Naive thymus-derived CD4-positive, alpha-beta T cell (primary cell): ENCODE measurements at regions of chr15 and their contacts with region 1.

Region 1: GRCh38 chr15:41603941-41604911 is 45.2 kb downstream of the TYRO3 start:
- DNase-seq: peak; percentile 19 to 62 (median 50)
- ATAC-seq: peak; percentile 93
- H3K4me3 ChIP-seq: no peak overlapping the region
- H3K4me3 Mint-ChIP-seq: peak overlapping the region in 9 of 10 donors; percentile 17 to 81 (median 73)
- H3K27ac ChIP-seq: no peak overlapping the region
- H3K27ac Mint-ChIP-seq: peak overlapping the region in 1 of 9 donors; percentile 74
- H3K4me1 ChIP-seq: peaks cover 0 to 5% of the 10 kb centered on the region in 2 donors
- H3K4me1 Mint-ChIP-seq: peaks cover 3 to 10% (median 7%) of the 10 kb centered on the region in 7 donors
- H3K27me3 ChIP-seq: no peaks in the 10 kb centered on the region
- H3K27me3 Mint-ChIP-seq: peaks cover 0 to 43% (median 9%) of the 10 kb centered on the region in 5 donors

Region 2: DNA sequence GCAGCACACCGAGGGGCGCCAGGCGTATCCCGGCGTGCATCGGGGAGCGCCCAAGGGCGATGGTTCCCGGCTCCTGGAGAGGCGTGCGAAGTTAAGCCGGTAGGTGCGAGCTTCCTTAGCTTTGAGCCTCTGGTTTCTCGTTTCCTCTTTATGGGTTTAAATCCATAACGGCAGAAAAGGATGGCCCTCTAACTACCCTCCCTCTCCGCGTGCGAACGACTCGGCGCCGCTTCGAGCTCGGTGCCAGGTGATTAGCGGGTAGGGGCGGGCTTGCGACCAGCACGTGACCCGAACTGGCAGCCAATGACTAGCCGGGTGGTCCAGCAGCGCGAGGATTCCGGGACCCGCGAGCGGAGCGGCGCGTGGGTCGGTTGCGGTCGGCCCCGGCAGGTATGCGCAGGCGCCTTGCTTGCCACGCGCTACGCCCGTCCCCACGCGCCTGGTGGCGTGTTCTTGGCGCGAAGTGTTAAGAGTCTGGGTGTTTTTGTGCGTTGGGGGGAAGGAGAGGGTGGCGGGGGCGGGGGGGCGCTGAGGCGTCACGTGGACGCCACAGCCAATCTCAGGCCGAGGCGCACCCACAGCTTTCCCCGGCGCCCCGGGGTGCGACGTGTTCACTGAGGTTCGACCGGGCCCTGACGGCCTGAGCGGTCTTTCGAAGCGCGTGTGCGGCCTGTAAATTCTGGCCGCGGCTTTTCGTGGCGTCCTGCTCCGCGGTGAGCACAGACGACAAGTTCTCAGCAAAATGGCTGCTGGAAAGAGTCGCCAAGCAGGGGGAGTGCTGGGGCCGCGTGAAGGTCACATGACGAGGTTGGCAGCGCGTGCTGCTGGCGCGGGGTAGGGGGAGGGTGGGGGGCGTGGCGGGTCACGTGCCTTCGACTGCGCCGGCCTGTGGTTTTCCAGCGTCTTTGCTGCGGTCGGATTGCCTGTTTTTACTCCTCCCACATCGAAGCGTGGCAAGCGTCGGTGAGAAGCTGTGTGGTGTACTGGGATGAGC is 17.3 kb after region 1 on chr15:
- CTCF ChIA-PET with region 1: interaction called, 3 read pairs
- POLR2A ChIA-PET with region 1: no interaction called
- intact Hi-C with region 1: loop called in 1 of 2 experiments (anchors 1 kb)
- DNase-seq: peak; percentile 56 to 81 (median 78)
- ATAC-seq: peak; percentile 87
- H3K4me3 ChIP-seq: peak overlapping the region; percentile 67
- H3K4me3 Mint-ChIP-seq: peak overlapping the region; percentile 55 to 87 (median 78)
- H3K27ac ChIP-seq: peak overlapping the region; percentile 41
- H3K27ac Mint-ChIP-seq: peak overlapping the region; percentile 68 to 87 (median 77)
- H3K4me1 ChIP-seq: peaks cover 5 to 8% of the 10 kb centered on the region in 2 donors
- H3K4me1 Mint-ChIP-seq: peaks cover 5 to 29% (median 18%) of the 10 kb centered on the region in 7 donors
- H3K27me3 ChIP-seq: no peaks in the 10 kb centered on the region
- H3K27me3 Mint-ChIP-seq: peaks cover 0 to 29% (median 0%) of the 10 kb centered on the region in 5 donors

Region 3: DNA sequence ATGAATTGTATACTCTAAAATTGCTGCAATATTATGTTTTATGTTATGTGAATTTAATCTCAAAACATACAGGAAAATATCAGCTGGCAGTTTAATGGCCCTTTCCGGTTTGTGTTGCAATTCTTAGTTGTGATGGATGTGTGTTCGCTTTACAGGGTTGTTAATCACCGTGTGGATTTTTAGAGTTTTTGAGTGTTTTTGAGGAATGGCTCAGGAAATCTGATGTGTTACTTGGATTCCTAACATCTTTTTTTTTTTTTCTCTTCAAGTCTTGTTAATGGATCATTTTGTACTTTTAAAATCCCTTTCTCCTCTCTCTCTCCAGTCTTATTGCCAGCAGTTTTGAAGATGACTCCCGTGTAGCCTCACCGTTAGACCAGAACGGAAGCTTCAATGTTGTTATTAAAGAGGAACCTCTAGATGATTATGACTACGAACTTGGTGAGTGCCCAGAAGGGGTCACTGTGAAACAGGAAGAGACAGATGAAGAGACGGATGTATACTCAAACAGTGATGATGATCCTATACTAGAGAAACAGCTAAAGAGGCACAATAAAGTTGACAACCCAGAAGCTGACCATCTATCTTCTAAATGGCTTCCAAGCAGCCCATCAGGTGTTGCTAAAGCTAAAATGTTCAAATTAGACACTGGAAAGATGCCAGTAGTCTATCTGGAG is 91.7 kb after region 1 on chr15:
- CTCF ChIA-PET with region 1: interaction called, 3 read pairs
- POLR2A ChIA-PET with region 1: no interaction called
- intact Hi-C with region 1: loop called in 1 of 2 experiments (anchors 5 kb)
- DNase-seq: peak in 7 of 9 donors; percentile 22 to 56 (median 44)
- ATAC-seq: peak; percentile 97
- H3K4me3 ChIP-seq: no peak overlapping the region
- H3K4me3 Mint-ChIP-seq: peak overlapping the region; percentile 3 to 69 (median 56)
- H3K27ac ChIP-seq: peak overlapping the region; percentile 42
- H3K27ac Mint-ChIP-seq: peak overlapping the region; percentile 22 to 81 (median 67)
- H3K4me1 ChIP-seq: peaks cover 0 to 10% of the 10 kb centered on the region in 2 donors
- H3K4me1 Mint-ChIP-seq: peaks cover 25 to 74% (median 59%) of the 10 kb centered on the region in 7 donors
- H3K27me3 ChIP-seq: no peaks in the 10 kb centered on the region
- H3K27me3 Mint-ChIP-seq: no peaks in the 10 kb centered on the region

Region 4: DNA sequence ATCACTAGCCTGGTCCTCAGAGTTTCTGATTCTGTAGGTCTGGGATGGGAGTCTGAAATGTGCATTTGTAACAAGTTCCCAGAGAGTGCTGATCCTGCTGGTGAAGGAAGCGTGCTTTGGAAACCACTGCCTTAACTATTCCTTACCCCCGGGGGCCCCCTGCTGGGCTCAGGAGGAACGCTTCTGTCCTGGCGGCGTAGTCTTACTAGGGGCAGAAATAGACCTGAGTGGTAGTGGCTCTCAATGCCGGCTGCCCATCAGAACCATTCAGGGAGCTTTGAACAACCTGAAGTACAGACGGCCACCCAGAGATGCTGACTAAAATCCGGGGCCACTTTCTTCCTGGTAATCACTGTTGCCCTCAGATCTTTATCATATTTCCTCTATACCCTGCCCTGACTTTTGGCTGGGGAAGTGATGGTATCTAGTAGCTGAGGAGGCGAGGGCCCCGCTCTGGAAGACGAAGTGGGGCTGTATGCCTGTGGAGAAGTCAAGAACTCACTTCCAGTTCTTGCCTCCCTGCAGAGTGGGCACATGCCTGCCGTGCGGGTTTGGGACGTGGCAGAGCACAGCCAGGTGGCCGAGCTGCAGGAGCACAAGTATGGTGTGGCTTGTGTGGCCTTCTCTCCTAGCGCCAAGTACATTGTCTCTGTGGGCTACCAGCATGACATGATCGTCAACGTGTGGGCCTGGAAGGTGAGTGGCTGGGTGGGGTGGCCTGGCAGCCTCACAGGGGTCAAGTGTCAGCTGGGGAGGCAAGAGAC is 207.4 kb after region 1 on chr15:
- CTCF ChIA-PET with region 1: interaction called, 14 read pairs
- POLR2A ChIA-PET with region 1: no interaction called
- intact Hi-C with region 1: loop called (anchors 1 kb)
- DNase-seq: peak; percentile 58 to 77 (median 72)
- ATAC-seq: peak; percentile 95
- H3K4me3 ChIP-seq: no peak overlapping the region
- H3K4me3 Mint-ChIP-seq: peak overlapping the region in 1 of 10 donors; percentile 30
- H3K27ac ChIP-seq: no peak overlapping the region
- H3K27ac Mint-ChIP-seq: peak overlapping the region in 1 of 9 donors; percentile 58
- H3K4me1 ChIP-seq: peaks cover 0 to 3% of the 10 kb centered on the region in 2 donors
- H3K4me1 Mint-ChIP-seq: peaks cover 8 to 28% (median 12%) of the 10 kb centered on the region in 7 donors
- H3K27me3 ChIP-seq: no peaks in the 10 kb centered on the region
- H3K27me3 Mint-ChIP-seq: no peaks in the 10 kb centered on the region

Region 5: DNA sequence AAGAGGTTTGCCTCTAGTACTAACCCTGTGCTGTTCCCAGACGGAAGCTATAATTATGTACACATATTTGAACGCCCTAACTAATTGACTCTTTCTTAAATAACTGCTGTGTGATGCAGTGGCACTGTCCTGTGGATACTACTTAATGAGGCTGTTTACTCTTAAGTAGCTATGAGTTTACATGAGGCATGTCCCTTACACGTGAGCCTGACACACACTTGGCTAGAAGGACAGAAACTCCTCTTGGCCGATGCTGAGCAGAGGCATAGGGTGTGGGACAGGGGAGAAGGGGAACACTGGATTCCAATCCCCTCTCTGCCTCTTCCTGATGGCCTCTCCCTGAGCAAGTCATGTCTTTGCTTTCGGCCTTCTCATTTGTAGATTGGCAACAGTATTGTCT is 346.3 kb after region 1 on chr15:
- CTCF ChIA-PET with region 1: no interaction called
- POLR2A ChIA-PET with region 1: no interaction called
- intact Hi-C with region 1: no loop called
- DNase-seq: no peak
- ATAC-seq: no peak
- H3K4me3 ChIP-seq: no peak overlapping the region
- H3K4me3 Mint-ChIP-seq: no peak overlapping the region
- H3K27ac ChIP-seq: no peak overlapping the region
- H3K27ac Mint-ChIP-seq: peak overlapping the region in 1 of 9 donors; percentile 38
- H3K4me1 ChIP-seq: no peaks in the 10 kb centered on the region
- H3K4me1 Mint-ChIP-seq: peaks cover 0 to 5% (median 0%) of the 10 kb centered on the region in 7 donors
- H3K27me3 ChIP-seq: no peaks in the 10 kb centered on the region
- H3K27me3 Mint-ChIP-seq: no peaks in the 10 kb centered on the region

Region 6: DNA sequence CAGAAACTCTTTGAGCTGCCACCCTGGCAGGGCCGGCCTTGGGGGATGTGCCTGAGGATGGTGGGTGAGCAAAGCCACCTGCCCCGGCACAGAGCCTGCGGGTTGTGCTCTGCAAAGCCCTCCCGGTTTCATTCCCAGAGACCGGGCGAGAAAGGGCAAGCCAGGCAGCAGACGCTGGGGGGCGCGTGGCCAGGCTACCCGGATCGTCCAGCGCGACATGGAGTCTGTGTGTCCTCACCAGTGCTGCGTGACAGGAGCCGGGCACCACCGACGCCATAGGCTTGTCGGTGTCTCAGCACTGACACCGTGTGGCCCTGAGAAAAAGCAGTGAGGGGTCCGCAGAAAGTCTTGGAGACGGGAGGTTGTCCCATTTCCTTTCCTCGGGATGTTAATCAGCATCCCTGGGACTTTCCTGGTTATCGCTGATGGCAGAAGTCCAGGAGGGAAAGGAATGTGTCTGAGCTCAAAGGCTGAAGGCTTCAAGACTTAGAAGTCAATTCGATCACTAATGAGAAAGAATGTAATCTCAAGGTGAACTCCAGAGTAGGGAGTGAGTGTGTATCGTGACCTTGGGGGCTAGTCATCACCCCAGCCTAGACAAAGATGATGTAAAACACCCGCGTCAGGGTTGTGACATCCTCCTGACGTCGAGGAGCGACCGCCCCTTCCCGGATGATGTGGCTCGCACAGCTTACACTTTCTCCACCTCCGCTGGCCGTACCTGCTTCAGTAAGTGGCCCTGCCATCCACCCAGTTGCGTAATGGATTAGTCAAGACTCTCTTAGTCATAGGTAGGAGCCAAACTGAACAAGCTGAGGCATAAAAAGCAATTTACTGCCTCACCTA is 452.9 kb after region 1 on chr15:
- CTCF ChIA-PET with region 1: no interaction called
- POLR2A ChIA-PET with region 1: no interaction called
- intact Hi-C with region 1: loop called in 1 of 2 experiments (anchors 2 kb)
- DNase-seq: peak; percentile 19 to 56 (median 30)
- ATAC-seq: peak; percentile 81
- H3K4me3 ChIP-seq: peak overlapping the region; percentile 23
- H3K4me3 Mint-ChIP-seq: peak overlapping the region; percentile 39 to 79 (median 60)
- H3K27ac ChIP-seq: no peak overlapping the region
- H3K27ac Mint-ChIP-seq: peak overlapping the region in 4 of 9 donors; percentile 24 to 77 (median 35)
- H3K4me1 ChIP-seq: no peaks in the 10 kb centered on the region
- H3K4me1 Mint-ChIP-seq: peaks cover 3 to 17% (median 10%) of the 10 kb centered on the region in 7 donors
- H3K27me3 ChIP-seq: peaks cover 0 to 12% of the 10 kb centered on the region in 2 donors
- H3K27me3 Mint-ChIP-seq: peaks cover 11 to 59% (median 27%) of the 10 kb centered on the region in 5 donors

Region 7: GRCh38 chr15:42933886-42934667 is 1329.9 kb after region 1 on chr15:
- CTCF ChIA-PET with region 1: no interaction called
- POLR2A ChIA-PET with region 1: no interaction called
- intact Hi-C with region 1: no loop called
- DNase-seq: no peak
- ATAC-seq: no peak
- H3K4me3 ChIP-seq: no peak overlapping the region
- H3K4me3 Mint-ChIP-seq: no peak overlapping the region
- H3K27ac ChIP-seq: no peak overlapping the region
- H3K27ac Mint-ChIP-seq: no peak overlapping the region
- H3K4me1 ChIP-seq: no peaks in the 10 kb centered on the region
- H3K4me1 Mint-ChIP-seq: no peaks in the 10 kb centered on the region
- H3K27me3 ChIP-seq: no peaks in the 10 kb centered on the region
- H3K27me3 Mint-ChIP-seq: peaks cover 0 to 3% (median 0%) of the 10 kb centered on the region in 5 donors